IMR-90 (cell line): ENCODE measurements at regions of chr2 and their contacts with region 1.

Region 1: DNA sequence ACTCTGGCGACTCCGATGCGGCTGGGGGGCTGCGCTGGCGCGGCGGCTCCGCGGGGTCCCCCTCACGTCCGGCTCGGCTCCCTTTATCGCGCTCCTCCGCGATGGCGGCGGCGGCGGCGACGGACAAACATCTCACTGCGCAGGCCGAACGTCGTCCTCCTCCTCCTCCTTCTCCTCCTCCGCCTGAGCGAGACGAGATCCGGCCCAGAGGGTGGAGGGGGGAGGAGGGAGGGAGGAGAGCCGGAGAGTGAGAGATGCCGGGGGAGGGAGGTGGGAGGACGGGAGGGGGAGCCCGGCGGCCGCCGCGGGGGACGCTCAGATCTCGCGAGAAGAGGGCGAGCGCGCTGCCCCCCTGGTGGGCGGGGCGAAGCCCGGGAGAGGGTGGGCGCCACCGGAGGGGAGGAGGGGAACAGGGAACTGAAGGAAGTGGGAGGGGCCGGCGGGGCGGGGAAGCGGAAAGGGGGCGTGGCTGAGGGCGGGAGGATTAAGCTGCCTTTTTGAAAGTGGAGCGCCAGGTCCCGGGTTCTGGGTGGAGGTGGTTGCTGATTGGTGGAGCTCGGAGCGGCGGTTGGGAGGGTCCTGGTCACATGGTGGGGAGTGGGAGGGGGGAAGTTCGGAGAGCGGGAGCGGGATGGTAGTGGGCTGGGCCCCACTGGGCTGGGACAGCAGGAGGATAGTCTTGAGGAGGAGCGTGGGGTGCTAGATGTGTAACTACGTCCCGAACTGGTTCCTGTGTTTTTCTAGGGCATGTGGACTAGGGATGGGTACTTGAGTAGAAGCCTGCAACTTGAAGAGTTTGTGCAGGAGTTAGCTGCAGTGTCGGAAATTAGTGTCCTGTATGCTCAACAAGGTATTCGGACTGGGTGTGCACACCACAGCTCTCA is at the start of gene CUL3:
- DNase-seq: peak; percentile 96
- ATAC-seq: peak; percentile 95
- H3K4me3 ChIP-seq: peak within 1 kb of the TSS; percentile 72
- H3K27ac ChIP-seq: peak within 1 kb of the TSS; percentile 90
- H3K4me1 ChIP-seq: 0 out of 2 replicates have a peak, but pooled peaks cover 2% of the 10 kb centered on the region
- H3K27me3 ChIP-seq: no peaks in the 10 kb centered on the region
- CTCF ChIP-seq: no peak
- POLR2A ChIP-seq: peak; percentile 90
- RAD21 ChIP-seq: no peak
- total RNA-seq, gene CUL3: 45.7 and 78.3 TPM in 2 replicates

Region 2: GRCh38 chr2:224347176-224348051 is 238.0 kb before region 1 on chr2:
- CTCF ChIA-PET with region 1: no interaction called
- POLR2A ChIA-PET with region 1: interaction called, 11 read pairs
- dilution Hi-C with region 1: no loop called
- in situ Hi-C with region 1: no loop called
- intact Hi-C with region 1: no loop called
- DNase-seq: no peak
- ATAC-seq: 0 out of 2 replicates have a peak, but pooled peaks have one; percentile 28
- H3K4me3 ChIP-seq: no peak overlapping the region
- H3K27ac ChIP-seq: no peak overlapping the region
- H3K4me1 ChIP-seq: peaks cover 5% of the 10 kb centered on the region; the same call in 1 of the 2 replicates
- H3K27me3 ChIP-seq: peaks cover 3% of the 10 kb centered on the region; the same call in 1 of the 2 replicates
- CTCF ChIP-seq: no peak
- POLR2A ChIP-seq: no peak
- RAD21 ChIP-seq: no peak

Region 3: GRCh38 chr2:224479826-224480225 is 105.6 kb before region 1 on chr2:
- CTCF ChIA-PET with region 1: no interaction called
- POLR2A ChIA-PET with region 1: no interaction called
- dilution Hi-C with region 1: no loop called
- in situ Hi-C with region 1: no loop called
- intact Hi-C with region 1: loop called (anchors 2 kb)
- DNase-seq: no peak
- ATAC-seq: no peak
- H3K4me3 ChIP-seq: no peak overlapping the region
- H3K27ac ChIP-seq: no peak overlapping the region
- H3K4me1 ChIP-seq: peaks cover 3% of the 10 kb centered on the region; the same call in 1 of the 2 replicates
- H3K27me3 ChIP-seq: no peaks in the 10 kb centered on the region
- CTCF ChIP-seq: no peak
- POLR2A ChIP-seq: no peak
- RAD21 ChIP-seq: no peak